ENCODE measurements at regions of chr9 and their contacts with region 1.

Region 1: DNA sequence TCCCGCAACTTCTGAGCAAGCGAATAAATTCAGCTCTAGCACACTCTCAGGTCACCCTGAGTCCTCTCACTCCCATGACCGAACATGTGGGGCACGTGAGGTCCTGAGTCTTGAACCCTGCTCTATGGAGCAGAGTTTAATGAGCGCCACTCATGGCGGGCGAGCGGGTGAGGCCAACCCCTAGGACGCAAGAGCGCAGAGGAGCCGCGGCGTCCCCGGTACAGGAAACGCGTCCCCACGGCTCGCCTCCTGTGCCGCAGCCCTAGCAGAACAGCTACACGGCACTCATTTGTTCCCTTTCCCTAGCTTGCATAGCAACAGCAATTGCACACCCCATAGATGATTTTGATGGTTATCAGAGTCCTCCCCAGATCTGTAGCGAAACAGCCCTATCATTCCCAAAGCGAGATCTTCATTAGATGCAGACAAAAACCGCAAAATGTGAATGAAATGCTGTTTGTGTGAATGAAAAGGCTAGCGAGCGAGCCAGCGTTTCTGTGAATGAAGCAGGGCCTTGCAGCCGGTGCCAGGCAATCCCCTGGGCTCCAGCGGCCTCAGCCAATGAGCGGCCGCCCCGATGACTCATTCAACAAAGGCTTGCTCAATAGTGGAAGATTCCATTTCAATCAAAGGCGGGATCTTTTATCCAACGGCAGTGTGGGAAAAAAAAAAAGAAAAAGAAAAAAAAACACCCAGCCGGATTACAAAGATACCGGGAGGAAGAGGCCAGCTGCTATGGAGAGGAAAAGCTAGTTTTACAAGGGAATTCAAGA is 1.5 kb upstream of the SHC3 start:
- DNase-seq: peak; percentile 76 to 77
- H3K4me3 ChIP-seq: peak overlapping the region; percentile 14
- H3K4me3 Mint-ChIP-seq: peak overlapping the region; percentile 93
- H3K27ac Mint-ChIP-seq: peak overlapping the region; percentile 97
- H3K4me1 ChIP-seq: no peaks in the 10 kb centered on the region
- H3K4me1 Mint-ChIP-seq: peaks cover 14% of the 10 kb centered on the region
- H3K27me3 ChIP-seq: no peaks in the 10 kb centered on the region
- H3K27me3 Mint-ChIP-seq: no peaks in the 10 kb centered on the region
- CTCF ChIP-seq: no peak

Region 2: DNA sequence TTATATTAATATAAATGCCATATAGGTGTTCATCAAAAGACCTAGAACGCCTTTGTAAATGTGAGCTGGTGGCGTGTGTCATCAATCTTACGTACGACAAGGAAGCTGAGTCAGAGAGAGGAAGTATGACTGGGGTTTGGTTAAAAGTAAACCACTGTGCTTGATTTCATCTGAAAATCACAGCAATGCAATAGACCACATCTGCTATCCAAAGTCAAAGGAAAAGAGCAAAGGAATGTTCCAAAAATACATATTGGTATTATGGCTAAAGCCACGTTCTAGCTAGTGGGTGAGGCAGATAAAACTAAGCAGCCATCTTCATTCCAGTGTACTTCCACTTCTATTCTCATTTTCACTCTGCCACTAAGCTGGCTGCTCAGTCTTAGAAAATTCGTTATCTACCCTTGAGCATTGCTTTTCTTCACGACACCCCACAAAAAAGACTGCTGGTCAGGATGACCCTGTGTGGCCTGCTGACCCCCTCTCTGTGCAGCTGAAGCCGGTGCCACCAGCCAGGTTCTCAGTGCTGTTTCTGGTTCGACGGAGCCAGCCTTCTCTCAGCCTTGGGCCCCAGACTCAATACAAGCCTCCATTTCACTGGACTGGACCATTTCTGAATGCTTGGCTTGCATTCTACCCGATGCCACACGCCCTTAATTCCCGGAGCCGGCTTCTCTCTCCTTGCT is 25.3 kb before region 1 on chr9:
- CTCF ChIA-PET with region 1: no interaction called
- POLR2A ChIA-PET with region 1: no interaction called
- intact Hi-C with region 1: no loop called
- DNase-seq: no peak
- H3K4me3 ChIP-seq: no peak overlapping the region
- H3K4me3 Mint-ChIP-seq: no peak overlapping the region
- H3K27ac Mint-ChIP-seq: no peak overlapping the region
- H3K4me1 ChIP-seq: no peaks in the 10 kb centered on the region
- H3K4me1 Mint-ChIP-seq: no peaks in the 10 kb centered on the region
- H3K27me3 ChIP-seq: no peaks in the 10 kb centered on the region
- H3K27me3 Mint-ChIP-seq: no peaks in the 10 kb centered on the region
- CTCF ChIP-seq: no peak

Region 3: DNA sequence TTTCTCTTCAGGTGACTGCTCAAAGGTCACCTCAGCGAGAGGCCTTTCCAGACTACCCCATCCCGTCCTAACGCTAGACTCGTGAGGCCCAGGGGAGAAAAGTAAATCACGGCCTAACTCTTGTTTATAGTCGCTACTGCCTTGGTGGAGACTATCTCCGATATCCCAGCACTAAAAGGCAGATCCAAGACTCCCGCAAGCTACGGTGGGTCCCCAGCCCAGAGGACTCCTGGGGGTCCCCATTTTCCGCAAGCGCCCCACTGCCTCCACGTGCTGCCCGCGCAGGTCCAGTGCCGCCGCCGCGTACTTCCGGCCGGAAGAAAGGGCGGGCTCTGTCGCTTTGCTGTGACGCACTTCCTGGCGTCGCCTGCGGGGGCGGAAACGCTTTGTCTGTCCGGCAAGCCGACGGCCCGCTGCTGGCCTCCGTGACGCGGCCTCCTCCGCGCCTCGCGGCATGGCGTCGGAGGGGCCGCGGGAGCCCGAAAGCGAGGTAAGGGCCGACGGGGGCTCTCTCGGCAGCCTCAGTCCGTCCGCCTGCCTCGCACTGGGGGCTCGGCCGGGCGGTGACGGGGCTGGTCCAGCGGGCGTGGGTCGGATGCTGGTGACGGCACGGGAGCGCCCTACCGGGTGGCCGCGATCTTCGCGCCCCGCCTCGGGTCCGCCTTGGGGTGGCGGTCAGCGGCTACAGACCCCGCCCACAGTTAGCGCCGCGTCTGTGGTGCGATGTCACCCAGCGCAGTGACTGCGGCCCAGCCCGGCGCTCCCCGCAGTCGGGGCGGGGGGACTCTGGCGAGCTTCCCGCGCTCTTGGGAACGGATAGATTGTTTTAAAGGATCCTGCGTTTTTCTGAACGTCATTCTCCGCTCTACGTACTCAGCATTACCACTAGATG is 138.3 kb after region 1 on chr9 and contains the start of gene SECISBP2:
- CTCF ChIA-PET with region 1: no interaction called
- POLR2A ChIA-PET with region 1: no interaction called
- intact Hi-C with region 1: loop called (anchors 10 kb)
- DNase-seq: peak; percentile 91 to 92
- H3K4me3 ChIP-seq: peak within 1 kb of the TSS; percentile 64
- H3K4me3 Mint-ChIP-seq: peak within 1 kb of the TSS; percentile 73
- H3K27ac Mint-ChIP-seq: peak within 1 kb of the TSS; percentile 89
- H3K4me1 ChIP-seq: peaks cover 14% of the 10 kb centered on the region
- H3K4me1 Mint-ChIP-seq: peaks cover 19% of the 10 kb centered on the region
- H3K27me3 ChIP-seq: no peaks in the 10 kb centered on the region
- H3K27me3 Mint-ChIP-seq: no peaks in the 10 kb centered on the region
- CTCF ChIP-seq: peak in 1 of 2 experiments; percentile 48
- total RNA-seq, gene SECISBP2: 21.0 and 23.2 TPM in 2 replicates